Motor neuron (in vitro differentiated cells): ENCODE measurements at regions of chr13 and their contacts with region 1.

Region 1: GRCh38 chr13:74287724-74288169 is 153.5 kb upstream of the KLF12 start:
- ATAC-seq: peak; percentile 18 to 44 (median 30)
- H3K4me3 ChIP-seq: peak overlapping the region in 4 of 5 donors; percentile 1 to 26 (median 14)
- H3K27ac ChIP-seq: peak overlapping the region; percentile 21 to 76
- H3K4me1 ChIP-seq: peaks cover 39 to 43% of the 10 kb centered on the region in 2 donors

Region 2: GRCh38 chr13:73754727-73755292 is 532.9 kb before region 1 on chr13:
- in situ Hi-C with region 1: loop called in 2 of 9 experiments (anchors 25 kb)
- ATAC-seq: peak; percentile 55 to 87 (median 72)
- H3K4me3 ChIP-seq: no peak overlapping the region
- H3K27ac ChIP-seq: no peak overlapping the region
- H3K4me1 ChIP-seq: peaks cover 3 to 13% of the 10 kb centered on the region in 2 donors

Region 3: DNA sequence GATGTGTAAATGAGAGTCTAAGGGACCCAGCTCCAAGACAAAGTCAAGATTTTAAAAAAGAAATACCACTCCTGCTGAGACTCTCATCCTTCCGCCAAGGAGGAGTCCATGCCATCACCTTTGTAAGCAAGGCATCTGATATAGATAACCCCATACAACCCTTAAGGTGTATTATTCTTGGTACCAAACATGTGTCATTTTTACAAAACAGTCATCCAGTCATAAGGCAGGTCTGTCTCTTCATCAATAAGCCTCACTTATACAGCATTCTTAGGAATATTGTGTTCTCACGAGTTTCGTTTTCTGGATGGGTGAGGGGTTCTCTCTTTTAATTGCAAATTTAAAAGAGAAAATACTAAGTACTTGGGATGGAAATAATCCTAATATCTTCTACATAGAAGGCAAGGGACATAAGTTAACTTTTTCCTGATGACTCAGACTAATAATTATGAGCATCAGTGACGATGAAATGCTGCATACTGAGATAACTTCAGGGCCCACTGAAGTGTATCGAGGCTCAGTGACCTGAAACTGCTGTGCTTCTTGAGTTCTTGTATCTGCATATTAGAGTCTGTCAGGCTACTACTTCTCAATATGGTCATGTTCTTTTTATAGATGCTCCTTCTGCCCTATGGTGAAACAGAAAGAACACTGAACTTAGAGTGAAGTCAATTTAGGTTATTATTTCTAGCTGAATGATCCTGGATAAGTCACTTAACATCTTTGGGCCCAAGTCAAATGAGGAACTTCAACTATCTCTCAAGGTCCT is 320.2 kb before region 1 on chr13:
- in situ Hi-C with region 1: no loop called
- ATAC-seq: peak in 2 of 8 experiments; percentile 40 to 80
- H3K4me3 ChIP-seq: no peak overlapping the region
- H3K27ac ChIP-seq: no peak overlapping the region
- H3K4me1 ChIP-seq: peaks cover 4 to 12% of the 10 kb centered on the region in 2 donors

Region 4: DNA sequence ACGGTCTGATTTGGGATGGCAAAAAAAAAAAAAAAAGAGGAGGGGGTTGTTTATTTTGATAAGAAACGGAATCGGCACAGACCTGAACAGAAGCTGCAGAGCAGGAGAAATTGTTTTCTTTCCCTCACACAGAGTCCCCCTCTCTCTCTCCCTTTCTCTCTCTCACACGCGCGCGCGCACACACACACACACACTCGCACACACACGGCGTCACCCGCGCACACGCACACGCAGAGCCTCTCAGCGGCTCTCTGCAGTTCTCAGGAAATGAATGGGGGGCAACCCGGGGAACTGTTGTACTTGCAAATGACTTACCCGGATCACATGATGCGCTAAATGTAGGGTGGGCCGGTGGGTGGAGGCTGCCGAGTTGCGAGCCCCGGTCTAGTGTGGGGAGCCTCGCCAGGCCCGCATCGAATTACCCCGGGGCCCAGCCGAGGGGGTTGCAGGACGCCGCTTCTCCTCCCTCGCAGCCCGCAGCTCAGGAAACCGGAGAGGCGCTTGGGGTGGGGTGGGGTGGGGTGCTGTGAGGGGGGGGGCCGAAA is 154.0 kb before region 1 on chr13:
- in situ Hi-C with region 1: loop called in 1 of 9 experiments (anchors 25 kb)
- ATAC-seq: peak; percentile 24 to 75 (median 70)
- H3K4me3 ChIP-seq: peak overlapping the region; percentile 66 to 87 (median 70)
- H3K27ac ChIP-seq: peak overlapping the region; percentile 91
- H3K4me1 ChIP-seq: peaks cover 16 to 23% of the 10 kb centered on the region in 2 donors

Region 5: DNA sequence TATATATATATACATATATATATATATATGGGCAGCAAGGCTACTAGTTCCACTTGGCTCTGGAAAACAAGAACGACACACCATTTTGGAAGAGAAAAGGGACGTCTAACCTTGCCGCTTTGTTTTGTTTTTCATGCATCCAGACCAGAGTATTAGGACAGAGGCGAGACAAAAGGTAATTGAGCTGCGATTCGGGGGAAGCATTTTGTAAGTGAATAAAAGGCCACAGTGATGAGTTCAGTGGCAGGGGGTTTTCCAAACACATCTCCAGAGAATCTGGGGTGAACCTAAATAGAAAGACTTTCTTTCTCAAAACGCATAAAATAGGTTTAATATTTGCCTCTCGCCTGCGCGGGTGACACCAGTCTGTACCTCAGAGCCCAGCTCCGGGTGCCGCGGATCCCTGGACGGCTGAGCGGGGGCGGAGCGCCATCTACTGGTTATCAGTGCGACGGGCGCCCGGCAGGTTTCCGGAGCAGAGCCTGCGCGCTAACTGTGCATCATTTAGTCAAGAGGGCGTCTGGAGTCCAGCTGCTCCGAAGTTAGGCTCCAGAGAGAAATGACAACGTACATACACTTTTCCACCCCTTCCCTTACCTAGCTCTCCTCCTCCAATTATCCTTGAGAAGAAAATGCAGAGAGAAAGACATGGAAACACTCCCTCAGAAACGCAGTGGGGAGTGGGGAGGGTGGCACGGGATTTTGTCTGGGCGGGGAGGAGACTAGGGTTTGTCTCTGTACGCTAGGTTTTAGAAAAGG is 931.9 kb after region 1 on chr13:
- in situ Hi-C with region 1: loop called in 1 of 9 experiments (anchors 25 kb)
- ATAC-seq: peak; percentile 95 to 100 (median 98)
- H3K4me3 ChIP-seq: peak overlapping the region; percentile 20 to 29 (median 23)
- H3K27ac ChIP-seq: no peak overlapping the region
- H3K4me1 ChIP-seq: peaks cover 15 to 25% of the 10 kb centered on the region in 2 donors